Activated naive CD4-positive, alpha-beta T cell treated with anti-CD3 and anti-CD28 coated beads, Interleukin-2, amount 10 ng/mL, durations not matched to agents 7 days and 5 days (primary cell): ENCODE measurements at regions of chr1 and their contacts with region 1.

Region 1: GRCh38 chr1:235415008-235415904 is 48.0 kb downstream of the TBCE start:
- DNase-seq: peak; percentile 72
- H3K4me3 Mint-ChIP-seq: no peak overlapping the region
- H3K27ac Mint-ChIP-seq: no peak overlapping the region
- H3K4me1 Mint-ChIP-seq: peaks cover 3% of the 10 kb centered on the region
- H3K27me3 Mint-ChIP-seq: no peaks in the 10 kb centered on the region

Region 2: GRCh38 chr1:234486498-234487448 is 928.5 kb before region 1 on chr1:
- CTCF ChIA-PET with region 1: interaction called, 19 read pairs
- DNase-seq: peak; percentile 60
- H3K4me3 Mint-ChIP-seq: no peak overlapping the region
- H3K27ac Mint-ChIP-seq: peak overlapping the region; percentile 70
- H3K4me1 Mint-ChIP-seq: peaks cover 35% of the 10 kb centered on the region
- H3K27me3 Mint-ChIP-seq: peaks cover 29% of the 10 kb centered on the region

Region 3: DNA sequence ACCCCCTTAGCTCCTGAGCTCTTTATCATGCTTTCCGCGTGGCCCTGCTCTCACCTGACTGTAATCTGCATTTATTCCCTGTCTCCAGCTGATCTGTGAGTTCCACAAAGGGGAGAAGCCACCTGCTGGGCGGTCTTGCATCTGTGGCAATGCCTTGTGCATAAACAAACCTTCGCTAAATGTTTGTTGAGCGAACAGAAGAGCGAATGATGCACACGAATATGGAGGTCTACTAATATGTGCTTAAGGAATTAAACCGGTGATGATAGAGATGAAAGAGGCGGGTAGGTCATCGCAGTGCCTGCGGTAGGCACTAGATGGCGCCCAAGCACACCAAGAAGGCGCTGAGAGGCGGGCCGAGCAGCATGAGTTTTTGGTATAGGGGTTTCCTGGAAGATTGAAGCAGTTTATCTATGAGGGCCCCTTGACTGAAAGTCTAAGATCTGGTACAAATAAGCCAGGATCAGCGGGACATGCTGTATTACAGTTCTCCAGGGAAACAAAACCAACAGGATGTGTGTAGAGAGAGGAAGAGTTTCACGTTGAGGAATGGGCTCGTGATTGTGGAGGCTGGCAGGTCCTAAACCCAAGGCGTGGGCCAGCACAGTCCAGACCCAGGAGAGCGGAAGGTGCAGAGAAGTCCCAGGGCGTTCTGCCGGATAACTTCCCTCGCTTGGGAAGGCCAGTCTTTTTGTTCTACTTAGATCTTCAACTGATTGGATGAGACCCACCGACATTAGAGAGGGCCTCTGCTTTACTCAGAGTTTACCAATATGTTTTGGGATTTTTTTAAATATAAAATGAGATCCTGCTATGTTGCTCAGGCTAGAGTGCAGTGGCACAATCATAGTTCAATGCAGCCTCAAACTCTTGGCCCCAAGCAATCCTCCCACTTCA is 321.3 kb before region 1 on chr1:
- CTCF ChIA-PET with region 1: interaction called, 10 read pairs
- DNase-seq: peak; percentile 88
- H3K4me3 Mint-ChIP-seq: no peak overlapping the region
- H3K27ac Mint-ChIP-seq: no peak overlapping the region
- H3K4me1 Mint-ChIP-seq: peaks cover 7% of the 10 kb centered on the region
- H3K27me3 Mint-ChIP-seq: peaks cover 39% of the 10 kb centered on the region

Region 4: DNA sequence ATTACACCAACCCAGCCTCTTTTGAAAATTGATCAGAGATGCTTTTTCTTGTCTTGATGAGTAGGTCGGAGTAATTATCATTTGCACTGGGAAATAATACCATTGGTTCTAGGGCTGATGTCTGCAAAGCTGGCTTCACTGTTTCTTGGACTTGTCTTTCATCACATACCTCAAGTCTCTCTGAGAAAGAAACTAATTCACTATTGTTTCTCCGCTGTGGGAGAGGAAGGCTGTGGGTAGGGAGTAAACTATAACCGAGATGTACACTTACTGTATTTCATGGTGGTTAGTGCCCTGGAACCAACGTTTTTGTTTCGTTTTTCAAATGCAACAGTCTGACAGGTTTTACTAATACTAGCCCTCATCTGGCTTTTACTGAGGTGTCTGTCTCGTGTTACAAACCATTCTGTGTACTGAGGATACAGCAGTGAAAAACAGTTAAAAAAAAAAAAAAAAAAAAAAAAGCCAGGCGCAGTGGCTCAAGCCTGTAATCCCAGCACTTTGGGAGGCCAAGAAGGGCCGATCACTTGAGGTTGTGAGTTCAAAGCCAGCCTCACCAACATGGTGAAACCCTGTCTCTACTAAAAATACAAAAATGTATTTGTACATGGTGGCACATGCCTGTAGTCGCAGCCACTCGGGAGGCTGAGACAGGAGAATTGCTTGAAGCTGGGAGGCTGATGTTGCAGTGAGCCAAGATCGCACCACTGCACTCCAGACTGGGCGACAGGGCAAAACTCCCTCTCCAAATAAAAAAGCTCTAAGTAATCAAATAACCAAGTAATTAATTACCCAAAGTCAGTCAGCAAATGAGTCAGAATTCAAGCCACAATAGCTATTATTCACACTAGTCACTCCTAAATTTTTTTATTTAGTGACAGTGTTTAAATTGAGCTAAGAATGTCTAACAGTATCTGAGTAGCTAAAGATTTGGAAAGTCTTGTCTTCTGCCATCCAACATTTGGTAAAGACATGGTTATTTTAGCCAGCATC is 309.9 kb before region 1 on chr1:
- CTCF ChIA-PET with region 1: interaction called, 24 read pairs
- DNase-seq: peak; percentile 18
- H3K4me3 Mint-ChIP-seq: no peak overlapping the region
- H3K27ac Mint-ChIP-seq: peak overlapping the region; percentile 82
- H3K4me1 Mint-ChIP-seq: peaks cover 46% of the 10 kb centered on the region
- H3K27me3 Mint-ChIP-seq: peaks cover 17% of the 10 kb centered on the region

Region 5: GRCh38 chr1:235253219-235253962 is 161.9 kb before region 1 on chr1:
- CTCF ChIA-PET with region 1: interaction called, 47 read pairs
- DNase-seq: peak; percentile 76
- H3K4me3 Mint-ChIP-seq: no peak overlapping the region
- H3K27ac Mint-ChIP-seq: no peak overlapping the region
- H3K4me1 Mint-ChIP-seq: peaks cover 12% of the 10 kb centered on the region
- H3K27me3 Mint-ChIP-seq: no peaks in the 10 kb centered on the region

Region 6: GRCh38 chr1:235259133-235259778 is 156.0 kb before region 1 on chr1:
- CTCF ChIA-PET with region 1: interaction called, 15 read pairs
- DNase-seq: no peak
- H3K4me3 Mint-ChIP-seq: no peak overlapping the region
- H3K27ac Mint-ChIP-seq: peak overlapping the region; percentile 51
- H3K4me1 Mint-ChIP-seq: peaks cover 33% of the 10 kb centered on the region
- H3K27me3 Mint-ChIP-seq: no peaks in the 10 kb centered on the region

Region 7: DNA sequence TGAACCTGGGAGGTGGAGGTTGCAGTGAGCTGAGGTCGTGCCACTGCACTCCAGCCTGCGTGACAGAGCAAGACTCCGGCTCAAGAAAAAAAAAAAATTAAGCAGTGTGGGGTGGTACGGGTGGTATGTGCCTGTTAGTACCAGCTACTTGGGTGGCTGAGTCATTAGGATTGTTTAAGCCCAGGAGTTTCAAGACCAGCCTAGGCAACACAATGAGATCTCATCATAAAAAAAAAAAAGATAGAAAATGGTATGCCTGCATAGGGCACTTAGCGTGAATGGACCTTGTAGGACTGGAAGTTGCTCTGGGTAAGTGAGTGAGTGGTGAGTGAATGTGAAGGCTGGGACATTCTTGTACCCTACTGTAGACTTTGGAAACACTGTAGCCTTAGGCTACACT is 11.1 kb before region 1 on chr1:
- CTCF ChIA-PET with region 1: interaction called, 24 read pairs
- DNase-seq: no peak
- H3K4me3 Mint-ChIP-seq: no peak overlapping the region
- H3K27ac Mint-ChIP-seq: peak overlapping the region; percentile 69
- H3K4me1 Mint-ChIP-seq: no peaks in the 10 kb centered on the region
- H3K27me3 Mint-ChIP-seq: no peaks in the 10 kb centered on the region